HCT116 (cell line): ENCODE measurements at regions of chr17 and their contacts with region 1.

Region 1: GRCh38 chr17:10875979-10876555 is 38.2 kb upstream of the PIRT start:
- DNase-seq: peak; percentile 36
- ATAC-seq: peak; percentile 89
- H3K4me3 ChIP-seq: no peak overlapping the region
- H3K27ac ChIP-seq: no peak overlapping the region
- H3K4me1 ChIP-seq: no peaks in the 10 kb centered on the region
- H3K27me3 ChIP-seq: peaks cover 5% of the 10 kb centered on the region; the same call in 1 of the 2 replicates
- CTCF ChIP-seq: peak; percentile 43 to 75 (median 49); a peak in 5 of 6 replicates
- POLR2A ChIP-seq: no peak
- RAD21 ChIP-seq: peak; percentile 74

Region 2: GRCh38 chr17:10737168-10737622 is 138.9 kb before region 1 on chr17:
- CTCF ChIA-PET with region 1: interaction called, 13 read pairs
- POLR2A ChIA-PET with region 1: no interaction called
- RAD21 ChIA-PET with region 1: no interaction called
- intact Hi-C with region 1: no loop called
- DNase-seq: peak; percentile 39
- ATAC-seq: peak; percentile 94
- H3K4me3 ChIP-seq: no peak overlapping the region
- H3K27ac ChIP-seq: no peak overlapping the region
- H3K4me1 ChIP-seq: no peaks in the 10 kb centered on the region
- H3K27me3 ChIP-seq: peaks cover 11% of the 10 kb centered on the region; the same call in 1 of the 2 replicates
- CTCF ChIP-seq: peak; percentile 58 to 87 (median 74); a peak in 5 of 6 replicates
- POLR2A ChIP-seq: no peak
- RAD21 ChIP-seq: peak; percentile 77

Region 3: GRCh38 chr17:10844621-10845387 is 31.3 kb before region 1 on chr17:
- CTCF ChIA-PET with region 1: no interaction called
- POLR2A ChIA-PET with region 1: no interaction called
- RAD21 ChIA-PET with region 1: no interaction called
- intact Hi-C with region 1: no loop called
- DNase-seq: peak; percentile 48
- ATAC-seq: peak; percentile 98
- H3K4me3 ChIP-seq: no peak overlapping the region
- H3K27ac ChIP-seq: no peak overlapping the region
- H3K4me1 ChIP-seq: peaks cover 4% of the 10 kb centered on the region in 2 experiments; a peak in 2 of 4 replicates
- H3K27me3 ChIP-seq: no peaks in the 10 kb centered on the region
- CTCF ChIP-seq: peak; percentile 68 to 88 (median 87)
- POLR2A ChIP-seq: no peak
- RAD21 ChIP-seq: peak; percentile 80

Region 4: DNA sequence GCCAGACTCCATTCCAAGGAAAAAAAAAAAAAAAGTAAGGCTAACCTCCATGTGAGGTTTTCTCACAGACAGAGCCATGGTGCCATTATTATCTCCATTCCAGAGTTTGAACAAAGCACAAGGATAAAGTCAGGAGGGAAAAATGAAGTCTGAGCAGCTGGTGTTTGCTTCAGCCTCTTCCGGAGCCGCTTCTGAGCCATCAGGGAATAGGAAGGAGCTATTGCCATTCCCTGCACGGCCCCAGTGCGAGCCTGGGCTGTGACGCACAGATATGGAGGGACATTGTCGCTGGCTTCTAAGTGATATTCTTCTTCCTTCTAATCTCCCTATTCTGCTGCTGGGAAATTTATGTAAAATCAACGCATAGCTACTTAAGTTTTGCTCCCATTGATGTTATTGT is 31.3 kb after region 1 on chr17:
- CTCF ChIA-PET with region 1: no interaction called
- POLR2A ChIA-PET with region 1: no interaction called
- RAD21 ChIA-PET with region 1: no interaction called
- intact Hi-C with region 1: no loop called
- DNase-seq: no peak
- ATAC-seq: no peak
- H3K4me3 ChIP-seq: no peak overlapping the region
- H3K27ac ChIP-seq: no peak overlapping the region
- H3K4me1 ChIP-seq: no peaks in the 10 kb centered on the region
- H3K27me3 ChIP-seq: no peaks in the 10 kb centered on the region
- CTCF ChIP-seq: no peak
- POLR2A ChIP-seq: no peak
- RAD21 ChIP-seq: no peak

Region 5: DNA sequence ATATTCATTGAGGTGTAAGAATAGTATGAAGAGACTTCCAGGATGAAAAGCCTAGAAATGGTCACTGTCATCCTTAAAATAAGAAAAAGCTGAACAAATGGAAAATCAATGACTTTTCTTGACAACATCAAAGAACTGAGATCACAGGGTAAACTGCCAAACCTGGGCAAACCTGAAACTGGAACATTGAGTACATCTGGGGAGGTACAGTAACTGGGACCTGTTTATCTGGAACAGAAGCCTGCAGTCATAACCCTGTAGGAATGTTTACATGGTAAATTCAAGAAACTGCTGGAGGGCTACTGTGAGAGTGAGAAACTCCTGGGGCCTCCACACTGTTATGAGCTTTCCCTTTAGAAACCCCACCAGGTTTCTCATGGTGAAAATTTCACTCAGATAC is 91.9 kb after region 1 on chr17:
- CTCF ChIA-PET with region 1: no interaction called
- POLR2A ChIA-PET with region 1: no interaction called
- RAD21 ChIA-PET with region 1: no interaction called
- intact Hi-C with region 1: no loop called
- DNase-seq: no peak
- ATAC-seq: no peak
- H3K4me3 ChIP-seq: no peak overlapping the region
- H3K27ac ChIP-seq: no peak overlapping the region
- H3K4me1 ChIP-seq: no peaks in the 10 kb centered on the region
- H3K27me3 ChIP-seq: no peaks in the 10 kb centered on the region
- CTCF ChIP-seq: no peak
- POLR2A ChIP-seq: no peak
- RAD21 ChIP-seq: no peak

Region 6: DNA sequence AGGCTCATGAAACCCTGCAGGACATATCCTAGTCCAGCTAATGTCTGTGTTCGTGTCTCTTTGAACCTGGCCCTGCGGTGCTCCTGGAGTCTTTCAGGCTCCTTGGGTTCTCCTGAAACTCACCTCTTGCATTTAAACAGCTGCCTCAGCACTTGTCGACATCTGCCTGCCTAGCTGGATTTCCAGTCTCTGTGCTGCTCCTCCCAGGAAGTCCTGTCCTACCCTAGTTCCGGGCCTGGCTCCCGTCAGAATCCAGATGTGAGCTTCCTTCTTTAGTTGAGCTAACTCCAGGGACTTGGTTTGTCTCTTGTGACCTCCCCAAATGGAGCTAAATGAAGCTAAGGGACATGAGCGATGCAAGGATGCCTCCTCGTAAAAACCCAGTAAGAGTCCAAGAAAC is 117.1 kb after region 1 on chr17:
- CTCF ChIA-PET with region 1: no interaction called
- POLR2A ChIA-PET with region 1: no interaction called
- RAD21 ChIA-PET with region 1: no interaction called
- intact Hi-C with region 1: no loop called
- DNase-seq: no peak
- ATAC-seq: no peak
- H3K4me3 ChIP-seq: no peak overlapping the region
- H3K27ac ChIP-seq: no peak overlapping the region
- H3K4me1 ChIP-seq: no peaks in the 10 kb centered on the region
- H3K27me3 ChIP-seq: no peaks in the 10 kb centered on the region
- CTCF ChIP-seq: no peak
- POLR2A ChIP-seq: no peak
- RAD21 ChIP-seq: no peak

Region 7: DNA sequence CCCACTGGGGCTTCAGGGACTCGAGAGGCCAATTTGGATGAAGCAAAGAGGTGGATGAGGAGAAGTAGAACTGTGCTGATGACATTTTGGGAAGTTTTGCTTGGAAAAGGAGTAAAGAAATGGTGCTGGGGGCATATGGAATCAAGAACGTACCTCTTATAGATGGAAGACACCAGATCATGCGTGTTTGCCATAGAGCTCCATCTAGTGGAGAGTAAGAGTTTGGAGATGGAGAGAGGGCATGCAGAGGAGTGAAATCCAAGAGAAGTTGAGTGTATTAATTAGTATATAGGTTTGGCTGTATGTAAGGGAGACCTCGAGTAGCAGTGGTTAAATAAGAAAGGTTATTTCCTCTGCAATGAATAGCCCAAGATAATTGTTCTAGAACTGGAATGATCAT is 420.9 kb after region 1 on chr17:
- CTCF ChIA-PET with region 1: no interaction called
- POLR2A ChIA-PET with region 1: no interaction called
- RAD21 ChIA-PET with region 1: no interaction called
- intact Hi-C with region 1: loop called (anchors 5 kb)
- DNase-seq: no peak
- ATAC-seq: no peak
- H3K4me3 ChIP-seq: no peak overlapping the region
- H3K27ac ChIP-seq: no peak overlapping the region
- H3K4me1 ChIP-seq: no peaks in the 10 kb centered on the region
- H3K27me3 ChIP-seq: no peaks in the 10 kb centered on the region
- CTCF ChIP-seq: peak in 2 of 3 experiments; percentile 29 to 43; a peak in 2 of 6 replicates
- POLR2A ChIP-seq: no peak
- RAD21 ChIP-seq: 0 out of 2 replicates have a peak, but pooled peaks have one; percentile 13

Region 8: DNA sequence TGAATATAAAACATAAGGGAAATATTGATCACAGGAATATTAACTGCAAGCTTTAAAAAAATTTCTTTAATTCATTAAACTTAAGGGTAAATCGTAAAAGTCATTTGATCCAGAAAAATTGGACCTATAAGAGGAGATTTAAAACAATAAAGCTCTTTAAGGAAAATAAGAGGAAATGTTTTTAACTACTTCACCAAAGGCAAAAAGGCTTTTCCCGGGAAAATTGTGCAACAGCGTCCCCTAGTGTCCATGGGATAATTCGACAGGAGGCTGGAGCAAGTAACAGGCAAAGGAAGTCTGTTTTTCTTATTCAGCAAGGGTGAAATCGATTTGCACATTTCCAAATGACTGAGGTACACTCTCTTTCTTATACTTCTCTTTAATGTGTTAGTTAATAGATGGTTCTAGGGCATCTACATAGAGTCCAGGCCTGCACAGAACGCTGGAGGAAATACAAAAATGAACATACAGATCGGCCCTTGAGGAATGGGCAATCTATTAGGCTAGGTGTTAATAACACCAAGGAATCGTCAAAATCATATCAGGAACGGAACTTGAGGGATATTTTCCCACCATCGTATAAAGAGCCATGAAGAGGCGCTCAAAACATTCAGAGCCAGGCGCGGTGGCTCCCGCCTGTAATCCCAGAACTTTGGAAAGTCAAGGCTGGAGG is 1059.8 kb after region 1 on chr17:
- CTCF ChIA-PET with region 1: interaction called, 15 read pairs
- POLR2A ChIA-PET with region 1: no interaction called
- RAD21 ChIA-PET with region 1: interaction called in 1 of 2 experiments, 4 read pairs
- intact Hi-C with region 1: loop called (anchors 1 kb)
- DNase-seq: peak; percentile 43
- ATAC-seq: peak; percentile 67; the same call in 1 of the 2 replicates
- H3K4me3 ChIP-seq: no peak overlapping the region
- H3K27ac ChIP-seq: no peak overlapping the region
- H3K4me1 ChIP-seq: no peaks in the 10 kb centered on the region
- H3K27me3 ChIP-seq: no peaks in the 10 kb centered on the region; the same call in 1 of the 2 replicates
- CTCF ChIP-seq: peak; percentile 73 to 99 (median 92); a peak in 5 of 6 replicates
- POLR2A ChIP-seq: no peak
- RAD21 ChIP-seq: peak; percentile 84

Region 9: GRCh38 chr17:12667299-12667958 is 1791.4 kb after region 1 on chr17:
- CTCF ChIA-PET with region 1: no interaction called
- POLR2A ChIA-PET with region 1: no interaction called
- RAD21 ChIA-PET with region 1: no interaction called
- intact Hi-C with region 1: loop called (anchors 10 kb)
- DNase-seq: peak; percentile 40
- ATAC-seq: peak; percentile 70
- H3K4me3 ChIP-seq: no peak overlapping the region
- H3K27ac ChIP-seq: no peak overlapping the region
- H3K4me1 ChIP-seq: no peaks in the 10 kb centered on the region
- H3K27me3 ChIP-seq: peaks cover 34% of the 10 kb centered on the region
- CTCF ChIP-seq: peak; percentile 35 to 53 (median 36); a peak in 4 of 6 replicates
- POLR2A ChIP-seq: no peak
- RAD21 ChIP-seq: peak; percentile 70